A673 (cell line): ENCODE measurements at regions of chr16 and their contacts with region 1.

Region 1: GRCh38 chr16:352547-353403 is at the start of gene AXIN1:
- DNase-seq: peak; percentile 98
- H3K4me3 ChIP-seq: peak within 1 kb of the TSS; percentile 79
- H3K27ac ChIP-seq: peak within 1 kb of the TSS; percentile 83
- H3K4me1 ChIP-seq: no peaks in the 10 kb centered on the region
- H3K27me3 ChIP-seq: no peaks in the 10 kb centered on the region
- CTCF ChIP-seq: peak; percentile 25; the same call in 1 of the 2 replicates
- total RNA-seq, gene AXIN1: 32.7 and 38.2 TPM in 2 replicates

Region 2: GRCh38 chr16:234468-235305 is 118.1 kb before region 1 on chr16 and contains the start of gene FAM234A:
- CTCF ChIA-PET with region 1: interaction called, 4 read pairs
- POLR2A ChIA-PET with region 1: no interaction called
- intact Hi-C with region 1: loop called (anchors 2 kb)
- DNase-seq: peak; percentile 97
- H3K4me3 ChIP-seq: peak within 1 kb of the TSS; percentile 77
- H3K27ac ChIP-seq: peak within 1 kb of the TSS; percentile 99
- H3K4me1 ChIP-seq: no peaks in the 10 kb centered on the region
- H3K27me3 ChIP-seq: no peaks in the 10 kb centered on the region
- CTCF ChIP-seq: peak; percentile 45
- total RNA-seq, gene FAM234A: 72.4 and 82.1 TPM in 2 replicates

Region 3: DNA sequence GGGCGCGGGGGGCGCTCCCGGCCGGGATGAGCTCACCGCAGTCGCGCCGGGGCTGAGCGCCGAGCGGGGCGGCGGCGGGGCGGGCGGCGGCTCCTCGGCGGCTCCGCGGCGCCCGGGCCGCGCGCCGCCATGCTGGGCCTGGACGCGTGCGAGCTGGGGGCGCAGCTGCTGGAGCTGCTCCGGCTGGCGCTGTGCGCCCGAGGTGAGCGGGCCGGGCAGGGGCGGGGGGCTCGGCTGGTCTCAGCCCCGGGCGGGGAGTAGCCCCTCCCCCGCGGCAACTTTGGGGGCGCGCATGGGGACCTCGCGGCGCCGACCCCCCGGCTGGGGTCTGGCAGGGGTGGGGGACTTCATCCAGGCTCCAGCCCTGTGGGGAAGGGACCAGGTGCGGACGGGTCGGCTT is 72.2 kb before region 1 on chr16 and contains the start of gene ARHGDIG:
- CTCF ChIA-PET with region 1: no interaction called
- POLR2A ChIA-PET with region 1: no interaction called
- intact Hi-C with region 1: loop called (anchors 2 kb)
- DNase-seq: no peak
- H3K4me3 ChIP-seq: peak within 1 kb of the TSS; percentile 52
- H3K27ac ChIP-seq: no peak within 1 kb of the TSS
- H3K4me1 ChIP-seq: no peaks in the 10 kb centered on the region
- H3K27me3 ChIP-seq: peaks cover 22% of the 10 kb centered on the region
- CTCF ChIP-seq: no peak
- total RNA-seq, gene ARHGDIG: 0.41 and 0.48 TPM in 2 replicates

Region 4: DNA sequence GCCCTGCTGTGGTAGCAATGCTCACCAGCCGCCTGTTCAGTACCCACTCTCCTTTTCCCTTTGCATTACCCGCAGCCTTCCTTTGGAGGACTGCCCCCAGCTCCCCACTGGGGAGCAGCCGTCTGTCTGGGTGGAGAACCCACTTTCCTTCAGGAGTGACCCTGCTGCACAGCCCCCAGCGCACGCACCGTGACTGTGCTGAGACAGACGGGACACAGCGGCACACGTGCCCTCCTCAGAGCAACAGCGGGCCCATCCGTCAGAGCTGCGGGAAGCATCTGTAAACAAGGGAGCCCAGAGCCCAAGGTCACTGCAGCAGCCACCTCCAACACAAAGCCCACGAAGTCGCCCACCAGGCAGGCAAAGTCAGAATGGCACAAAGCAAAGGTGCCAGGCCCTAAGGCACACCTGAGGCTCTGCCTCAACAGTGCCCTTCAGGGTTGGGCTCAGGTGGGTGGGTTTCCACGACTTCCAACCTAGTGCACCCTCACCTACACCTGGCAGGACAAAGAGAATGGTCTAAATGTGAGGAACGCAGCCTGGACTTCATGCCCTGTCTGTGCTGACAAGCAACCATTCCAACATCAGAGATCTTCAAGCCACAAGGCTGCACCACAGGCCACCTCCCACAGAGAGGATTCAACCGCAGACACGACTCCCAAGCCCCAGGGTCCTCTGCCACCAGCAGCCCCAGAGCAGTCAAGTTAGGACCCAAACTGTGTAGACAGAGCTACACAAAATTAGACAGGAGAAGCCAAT is 10.1 kb before region 1 on chr16:
- CTCF ChIA-PET with region 1: interaction called, 11 read pairs
- POLR2A ChIA-PET with region 1: no interaction called
- intact Hi-C with region 1: no loop called
- DNase-seq: no peak
- H3K4me3 ChIP-seq: no peak overlapping the region
- H3K27ac ChIP-seq: no peak overlapping the region
- H3K4me1 ChIP-seq: no peaks in the 10 kb centered on the region
- H3K27me3 ChIP-seq: no peaks in the 10 kb centered on the region
- CTCF ChIP-seq: no peak

Region 5: GRCh38 chr16:714558-715476 is 362.0 kb after region 1 on chr16 and contains the start of gene METRN:
- CTCF ChIA-PET with region 1: no interaction called
- POLR2A ChIA-PET with region 1: no interaction called
- intact Hi-C with region 1: no loop called
- DNase-seq: peak; percentile 92
- H3K4me3 ChIP-seq: peak within 1 kb of the TSS; percentile 32
- H3K27ac ChIP-seq: no peak within 1 kb of the TSS
- H3K4me1 ChIP-seq: peaks cover 2% of the 10 kb centered on the region
- H3K27me3 ChIP-seq: peaks cover 32% of the 10 kb centered on the region
- CTCF ChIP-seq: no peak
- total RNA-seq, gene METRN: 0.86 and 1.8 TPM in 2 replicates